Endothelial cell of umbilical vein (primary cell): ENCODE measurements at regions of chr3 and their contacts with region 1.

Region 1: DNA sequence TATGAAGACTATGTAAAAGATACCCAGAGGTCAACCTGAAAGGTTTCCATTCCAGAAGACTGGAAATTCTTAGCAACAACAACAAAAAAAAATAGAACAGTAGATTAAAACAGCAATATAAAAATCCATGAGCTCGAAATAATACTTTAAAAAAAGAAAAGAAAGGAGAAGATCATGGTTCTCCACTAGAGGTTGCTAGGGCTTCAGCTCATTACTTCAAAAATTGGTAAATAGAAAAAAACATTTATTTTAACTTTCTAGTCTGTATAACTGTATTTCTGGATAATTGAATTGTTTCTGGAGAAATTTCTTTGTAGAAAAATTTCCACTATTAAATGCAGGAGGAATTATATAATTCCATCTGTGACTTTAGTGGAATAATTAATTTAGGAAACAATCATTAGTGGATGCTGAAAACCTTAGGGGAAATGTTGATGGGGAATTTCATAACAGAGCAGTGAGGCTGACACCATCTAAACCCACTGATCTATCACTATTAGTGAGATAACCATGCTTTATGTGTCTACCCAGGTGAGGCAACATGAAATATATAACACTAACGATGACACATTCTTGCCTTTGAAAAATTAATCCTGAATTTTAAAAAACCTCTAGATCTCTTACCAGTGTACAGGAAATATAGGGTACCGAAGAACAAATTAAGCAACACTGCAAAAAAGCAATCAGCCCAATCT is 62.5 kb upstream of the SNRK start:
- DNase-seq: peak; percentile 63
- H3K4me3 ChIP-seq: no peak overlapping the region
- H3K27ac ChIP-seq: peak overlapping the region; percentile 14
- H3K4me1 ChIP-seq: no peaks in the 10 kb centered on the region
- H3K27me3 ChIP-seq: no peaks in the 10 kb centered on the region
- CTCF ChIP-seq: peak; percentile 21 to 34
- POLR2A ChIP-seq: no peak

Region 2: DNA sequence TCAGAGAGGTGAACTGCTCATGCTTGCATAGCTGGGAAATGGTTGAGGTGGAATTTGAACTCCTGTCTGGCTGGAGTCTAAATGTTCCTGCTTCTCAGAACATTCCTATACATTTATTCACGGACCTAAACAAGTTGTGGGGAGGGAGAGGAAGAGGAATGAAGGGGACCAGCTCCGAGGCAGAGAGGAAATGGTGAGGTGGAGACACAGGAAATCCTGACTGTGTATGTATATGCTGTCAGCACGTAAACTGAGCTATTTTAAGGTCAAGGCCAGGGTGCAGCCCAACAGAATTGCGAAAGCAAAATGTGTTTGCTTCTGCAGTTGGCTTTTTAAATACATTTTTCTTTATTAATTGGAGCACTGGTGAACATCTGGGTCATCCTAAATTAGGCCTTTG is 43.8 kb before region 1 on chr3:
- CTCF ChIA-PET with region 1: interaction called, 10 read pairs
- POLR2A ChIA-PET with region 1: no interaction called
- dilution Hi-C with region 1: no loop called
- intact Hi-C with region 1: no loop called
- DNase-seq: peak; percentile 96
- H3K4me3 ChIP-seq: no peak overlapping the region
- H3K27ac ChIP-seq: peak overlapping the region; percentile 89
- H3K4me1 ChIP-seq: peaks cover 47% of the 10 kb centered on the region
- H3K27me3 ChIP-seq: no peaks in the 10 kb centered on the region
- CTCF ChIP-seq: no peak
- POLR2A ChIP-seq: no peak

Region 3: DNA sequence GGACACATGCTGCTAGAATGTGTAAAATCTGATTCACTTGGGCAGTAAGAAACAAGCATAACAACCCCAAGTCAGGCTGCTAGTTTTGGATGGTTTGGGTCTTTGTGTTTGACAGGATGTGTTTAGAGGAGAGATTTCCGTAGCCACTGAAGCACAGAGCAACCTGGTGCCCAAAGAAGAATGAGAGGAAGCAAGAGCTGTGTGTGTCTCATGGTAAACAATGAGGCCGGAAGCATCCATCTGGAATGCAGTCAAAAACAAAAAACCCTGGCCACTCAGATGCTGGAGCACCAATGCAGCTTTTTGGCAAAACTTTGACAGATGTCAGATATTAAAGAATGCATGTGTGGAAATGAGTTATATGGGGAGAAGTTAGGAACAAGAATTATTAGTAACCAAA is 23.2 kb after region 1 on chr3:
- CTCF ChIA-PET with region 1: interaction called, 25 read pairs
- POLR2A ChIA-PET with region 1: interaction called, 3 read pairs
- dilution Hi-C with region 1: no loop called
- intact Hi-C with region 1: loop called (anchors 1 kb)
- DNase-seq: peak; percentile 97
- H3K4me3 ChIP-seq: no peak overlapping the region
- H3K27ac ChIP-seq: peak overlapping the region; percentile 99
- H3K4me1 ChIP-seq: peaks cover 47% of the 10 kb centered on the region
- H3K27me3 ChIP-seq: no peaks in the 10 kb centered on the region
- CTCF ChIP-seq: no peak
- POLR2A ChIP-seq: peak; percentile 55

Region 4: DNA sequence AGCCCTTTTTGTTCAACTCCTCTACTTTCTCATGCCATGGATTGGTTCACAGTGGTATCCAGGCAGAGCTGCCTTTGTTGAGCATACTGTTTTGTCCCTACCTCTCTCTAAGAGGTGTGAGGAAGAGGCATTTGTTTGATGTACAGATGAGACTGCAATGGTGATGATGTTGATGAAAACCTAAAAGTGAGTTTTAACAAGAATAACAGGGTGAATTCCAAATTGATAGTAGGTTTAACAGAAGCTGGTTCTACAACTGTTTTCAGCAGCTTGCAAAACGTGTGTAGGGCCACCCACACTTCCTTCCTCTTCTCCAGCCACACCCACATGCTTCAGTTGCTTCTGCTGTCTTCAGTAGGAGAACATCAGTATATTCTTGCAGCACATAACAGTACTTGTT is 72.7 kb after region 1 on chr3:
- CTCF ChIA-PET with region 1: interaction called, 24 read pairs
- POLR2A ChIA-PET with region 1: interaction called, 4 read pairs
- dilution Hi-C with region 1: no loop called
- intact Hi-C with region 1: no loop called
- DNase-seq: peak; percentile 24
- H3K4me3 ChIP-seq: no peak overlapping the region
- H3K27ac ChIP-seq: no peak overlapping the region
- H3K4me1 ChIP-seq: peaks cover 59% of the 10 kb centered on the region
- H3K27me3 ChIP-seq: no peaks in the 10 kb centered on the region
- CTCF ChIP-seq: no peak
- POLR2A ChIP-seq: no peak

Region 5: GRCh38 chr3:43326891-43327581 is 103.2 kb after region 1 on chr3:
- CTCF ChIA-PET with region 1: interaction called, 10 read pairs
- POLR2A ChIA-PET with region 1: interaction called, 3 read pairs
- dilution Hi-C with region 1: no loop called
- intact Hi-C with region 1: no loop called
- DNase-seq: peak; percentile 23
- H3K4me3 ChIP-seq: no peak overlapping the region
- H3K27ac ChIP-seq: no peak overlapping the region
- H3K4me1 ChIP-seq: peaks cover 9% of the 10 kb centered on the region
- H3K27me3 ChIP-seq: no peaks in the 10 kb centered on the region
- CTCF ChIP-seq: no peak
- POLR2A ChIP-seq: no peak

Region 6: DNA sequence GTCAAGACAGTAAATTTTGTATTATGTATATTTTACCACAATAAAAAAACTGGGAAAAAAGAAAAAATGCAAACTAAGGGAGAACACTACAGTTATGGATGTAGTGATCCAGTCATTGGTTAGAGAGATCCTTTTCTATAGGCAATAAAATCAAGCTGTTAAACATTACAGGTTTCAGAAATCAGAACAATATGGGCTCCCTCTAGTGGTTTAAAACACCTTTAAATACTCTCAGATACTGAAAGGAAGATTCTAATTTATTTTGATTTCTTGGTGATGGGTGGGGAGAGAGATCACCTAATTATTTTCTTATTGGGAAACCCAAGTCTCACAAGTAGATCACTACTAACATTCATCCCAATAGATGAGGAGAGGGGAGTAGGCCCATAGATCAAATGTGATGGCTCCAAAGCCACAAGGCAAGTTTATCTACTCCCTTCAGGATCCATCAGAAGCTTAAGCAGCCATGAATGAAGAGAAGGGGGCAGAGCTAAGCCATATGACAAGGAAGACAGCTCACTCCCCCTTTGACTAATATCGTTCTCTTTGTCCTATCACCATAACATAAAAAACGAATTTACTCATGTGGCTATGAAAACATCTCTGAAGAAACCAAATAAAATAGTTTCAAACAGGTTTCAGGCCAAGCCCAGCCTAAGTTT is 279.4 kb after region 1 on chr3:
- CTCF ChIA-PET with region 1: interaction called, 41 read pairs
- POLR2A ChIA-PET with region 1: interaction called, 4 read pairs
- dilution Hi-C with region 1: no loop called
- intact Hi-C with region 1: loop called (anchors 1 kb)
- DNase-seq: peak; percentile 67
- H3K4me3 ChIP-seq: no peak overlapping the region
- H3K27ac ChIP-seq: peak overlapping the region; percentile 58
- H3K4me1 ChIP-seq: peaks cover 39% of the 10 kb centered on the region
- H3K27me3 ChIP-seq: no peaks in the 10 kb centered on the region
- CTCF ChIP-seq: peak; percentile 20 to 33
- POLR2A ChIP-seq: no peak

Region 7: GRCh38 chr3:44198284-44199269 is 974.8 kb after region 1 on chr3:
- CTCF ChIA-PET with region 1: interaction called, 6 read pairs
- POLR2A ChIA-PET with region 1: no interaction called
- dilution Hi-C with region 1: no loop called
- intact Hi-C with region 1: loop called (anchors 10 kb)
- DNase-seq: peak; percentile 69
- H3K4me3 ChIP-seq: no peak overlapping the region
- H3K27ac ChIP-seq: no peak overlapping the region
- H3K4me1 ChIP-seq: no peaks in the 10 kb centered on the region
- H3K27me3 ChIP-seq: peaks cover 2 to 3% of the 10 kb centered on the region in 2 experiments
- CTCF ChIP-seq: peak; percentile 72 to 83
- POLR2A ChIP-seq: no peak

Region 8: DNA sequence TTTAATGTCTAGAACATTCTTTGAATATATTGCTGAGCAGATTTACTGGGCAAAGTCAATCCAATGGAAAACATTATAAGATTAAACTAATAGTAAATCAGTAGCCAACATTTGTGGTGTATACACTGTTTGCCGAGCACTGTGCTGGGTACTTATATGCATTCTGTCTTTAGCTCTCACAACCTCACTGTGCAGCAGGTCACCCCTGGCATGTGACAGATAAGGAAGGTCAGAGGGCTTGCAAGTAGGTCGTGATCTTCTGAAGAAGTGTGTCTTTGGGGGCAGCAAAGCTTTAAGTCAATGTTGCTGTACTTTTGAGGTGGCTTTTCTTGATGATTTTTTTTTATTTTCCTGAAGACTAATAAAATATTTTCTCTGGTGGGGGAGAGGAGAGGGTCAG is 1177.0 kb after region 1 on chr3:
- CTCF ChIA-PET with region 1: no interaction called
- POLR2A ChIA-PET with region 1: no interaction called
- dilution Hi-C with region 1: no loop called
- intact Hi-C with region 1: no loop called
- DNase-seq: no peak
- H3K4me3 ChIP-seq: no peak overlapping the region
- H3K27ac ChIP-seq: no peak overlapping the region
- H3K4me1 ChIP-seq: no peaks in the 10 kb centered on the region
- H3K27me3 ChIP-seq: no peaks in the 10 kb centered on the region
- CTCF ChIP-seq: no peak
- POLR2A ChIP-seq: no peak